Dorsolateral prefrontal cortex (tissue), 120 donors: ENCODE measurements at regions of chr16 and their contacts with region 1.

Region 1: GRCh38 chr16:71412270-71413160 is 29.3 kb downstream of the TLE7 start:
- DNase-seq: peak in 9 of 10 donors; percentile 36 to 71 (median 62)
- H3K4me3 ChIP-seq: peak overlapping the region in 3 of 59 donors; percentile 8 to 31 (median 19)
- H3K27ac ChIP-seq: no peak overlapping the region
- H3K27me3 ChIP-seq: peaks cover 0 to 34% (median 3%) of the 10 kb centered on the region in 45 donors
- CTCF ChIP-seq: peak; percentile 74 to 98 (median 93)

Region 2: GRCh38 chr16:71499775-71500364 is 87.4 kb after region 1 on chr16:
- intact Hi-C with region 1: loop called (anchors 2 kb)
- DNase-seq: peak in 4 of 10 donors; percentile 9 to 45 (median 34)
- H3K4me3 ChIP-seq: no peak overlapping the region
- H3K27ac ChIP-seq: no peak overlapping the region
- H3K27me3 ChIP-seq: no peaks in the 10 kb centered on the region
- CTCF ChIP-seq: peak in 55 of 56 donors; percentile 56 to 89 (median 76)

Region 3: GRCh38 chr16:71610936-71611871 is 198.7 kb after region 1 on chr16:
- intact Hi-C with region 1: loop called (anchors 5 kb)
- DNase-seq: peak; percentile 25 to 83 (median 64)
- H3K4me3 ChIP-seq: peak overlapping the region in 35 of 59 donors; percentile 2 to 50 (median 27)
- H3K27ac ChIP-seq: no peak overlapping the region
- H3K27me3 ChIP-seq: peaks cover 0 to 20% (median 0%) of the 10 kb centered on the region in 45 donors
- CTCF ChIP-seq: peak; percentile 73 to 96 (median 91)